ENCODE measurements at regions of chr17 and their contacts with region 1.

Region 1: GRCh38 chr17:40121181-40122135 is at the start of gene MSL1:
- DNase-seq: no peak
- H3K4me3 ChIP-seq: peak within 1 kb of the TSS; percentile 97
- H3K27ac ChIP-seq: peak within 1 kb of the TSS; percentile 85
- H3K27me3 ChIP-seq: no peaks in the 10 kb centered on the region
- CTCF ChIP-seq: no peak
- polyA plus RNA-seq, gene MSL1: 69.8 and 92.2 TPM in 2 replicates

Region 2: DNA sequence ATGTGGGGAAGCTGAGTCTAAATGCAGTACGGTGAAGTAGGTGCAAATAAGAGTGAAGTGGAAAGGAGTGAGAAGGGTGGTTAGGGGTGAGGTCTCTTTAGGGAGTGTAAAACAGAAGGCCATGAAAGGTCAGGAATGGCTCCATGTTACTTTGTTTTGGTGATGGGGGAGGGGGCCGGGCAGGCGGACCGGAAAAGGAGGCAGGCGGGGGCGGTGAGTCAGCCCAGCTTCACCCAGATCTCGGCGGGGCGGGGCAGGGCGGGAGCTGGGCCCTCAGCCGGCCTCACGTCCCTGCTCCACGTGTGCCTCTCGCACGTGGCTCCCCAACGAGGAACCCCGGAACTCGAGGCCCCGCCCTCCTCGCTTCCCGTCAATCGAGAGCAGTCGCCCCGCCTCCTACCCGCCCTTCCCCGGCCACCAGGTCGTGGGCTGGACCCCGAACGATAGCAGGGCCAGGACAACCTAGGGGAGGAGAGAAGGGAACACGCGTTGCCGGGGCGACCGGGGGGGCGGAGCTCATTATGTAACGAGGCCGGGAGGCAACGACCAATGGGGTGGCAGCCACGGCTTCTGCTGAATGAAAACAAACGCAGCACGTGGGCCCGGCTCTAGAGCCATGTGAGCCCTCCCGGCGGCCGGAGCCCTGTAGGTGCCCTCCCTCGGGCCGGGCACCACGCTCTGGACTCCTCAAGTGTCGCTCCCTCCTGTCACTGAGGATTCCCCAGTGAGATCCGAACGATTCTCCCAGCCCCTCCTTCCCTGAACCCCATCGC is 22.4 kb before region 1 on chr17:
- CTCF ChIA-PET with region 1: no interaction called
- POLR2A ChIA-PET with region 1: interaction called, 14 read pairs
- DNase-seq: peak; percentile 98
- H3K4me3 ChIP-seq: peak overlapping the region; percentile 76
- H3K27ac ChIP-seq: peak overlapping the region; percentile 85
- H3K27me3 ChIP-seq: no peaks in the 10 kb centered on the region
- CTCF ChIP-seq: no peak

Region 3: DNA sequence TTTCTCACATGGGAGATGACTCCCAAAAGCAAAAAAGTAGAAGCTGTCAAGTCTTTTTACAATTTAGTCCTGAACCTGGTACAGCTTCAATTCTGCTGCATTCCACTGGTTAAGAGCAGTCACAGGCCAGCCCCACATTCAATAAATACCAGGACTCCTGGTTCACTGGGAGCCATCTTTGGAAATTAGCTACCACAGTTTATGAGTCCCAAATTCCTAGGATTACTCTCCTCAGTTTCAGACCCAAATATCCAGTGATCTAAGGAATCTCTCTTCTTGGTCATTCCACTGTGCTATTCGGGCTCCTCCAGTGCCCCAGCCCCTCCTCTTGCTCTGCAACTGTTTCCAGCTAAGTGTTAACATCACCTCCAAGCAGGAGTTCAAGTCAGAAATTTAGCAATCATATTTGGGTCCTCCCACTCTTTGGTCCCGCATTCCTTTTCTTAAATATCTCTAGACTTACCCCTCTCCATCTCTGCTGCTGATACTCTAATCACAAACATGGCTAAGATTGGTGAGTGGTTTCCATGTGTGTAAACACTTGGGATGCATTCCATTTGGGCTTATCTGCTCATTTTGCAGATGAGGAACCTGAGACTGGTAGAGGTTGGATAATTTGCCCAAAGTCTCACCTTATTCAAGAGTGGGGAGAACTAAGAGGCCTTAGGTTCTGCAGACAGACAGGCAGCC is 88.1 kb after region 1 on chr17:
- CTCF ChIA-PET with region 1: no interaction called
- POLR2A ChIA-PET with region 1: no interaction called
- DNase-seq: no peak
- H3K4me3 ChIP-seq: no peak overlapping the region
- H3K27ac ChIP-seq: peak overlapping the region; percentile 33
- H3K27me3 ChIP-seq: no peaks in the 10 kb centered on the region
- CTCF ChIP-seq: no peak

Region 4: GRCh38 chr17:40707720-40708119 is 586.3 kb after region 1 on chr17:
- CTCF ChIA-PET with region 1: no interaction called
- POLR2A ChIA-PET with region 1: no interaction called
- DNase-seq: no peak
- H3K4me3 ChIP-seq: no peak overlapping the region
- H3K27ac ChIP-seq: no peak overlapping the region
- H3K27me3 ChIP-seq: peaks cover 15% of the 10 kb centered on the region
- CTCF ChIP-seq: no peak